Calu3 (cell line): ENCODE measurements at regions of chr6 and their contacts with region 1.

Region 1: GRCh38 chr6:104357928-104358327 is 501.8 kb downstream of the HACE1 start:
- DNase-seq: no peak
- H3K4me3 Mint-ChIP-seq: no peak overlapping the region
- H3K27ac Mint-ChIP-seq: no peak overlapping the region
- H3K4me1 Mint-ChIP-seq: no peaks in the 10 kb centered on the region
- H3K27me3 Mint-ChIP-seq: peaks cover 5% of the 10 kb centered on the region
- CTCF ChIP-seq: no peak

Region 2: DNA sequence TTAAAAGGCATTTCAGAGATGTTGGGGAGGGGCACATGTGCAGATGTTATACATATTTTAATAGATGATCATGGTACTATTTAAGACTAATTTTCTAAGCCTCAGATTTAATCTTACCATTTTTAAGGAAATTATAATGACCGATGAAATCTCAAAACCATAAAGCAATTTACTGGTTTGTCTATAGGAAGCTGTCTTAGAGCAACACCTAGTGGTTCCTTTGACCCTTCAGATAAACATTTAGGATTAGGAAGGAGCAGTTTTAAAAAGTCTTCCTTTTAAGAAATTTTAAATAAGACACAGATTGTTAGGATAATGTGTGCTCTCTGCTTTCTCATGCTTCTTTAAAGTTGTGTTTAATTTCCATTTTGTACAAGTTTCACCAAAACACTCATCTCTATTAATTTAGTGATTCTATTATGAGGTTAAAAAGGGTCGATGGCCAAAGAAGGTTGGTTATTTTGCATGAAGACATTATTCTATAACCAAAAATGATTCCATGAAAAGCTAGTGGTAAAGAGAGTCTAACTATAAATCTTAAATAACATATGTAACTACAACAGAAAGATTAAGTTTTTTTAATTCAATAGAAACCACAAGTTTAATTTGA is 125.4 kb after region 1 on chr6:
- CTCF ChIA-PET with region 1: no interaction called
- intact Hi-C with region 1: loop called (anchors 10 kb)
- DNase-seq: no peak
- H3K4me3 Mint-ChIP-seq: no peak overlapping the region
- H3K27ac Mint-ChIP-seq: no peak overlapping the region
- H3K4me1 Mint-ChIP-seq: no peaks in the 10 kb centered on the region
- H3K27me3 Mint-ChIP-seq: no peaks in the 10 kb centered on the region
- CTCF ChIP-seq: no peak